Heart right ventricle (tissue), 16 donors: ENCODE measurements at regions of chr11 and their contacts with region 1.

Region 1: GRCh38 chr11:20912922-20913512 is 243.6 kb downstream of the NELL1 start:
- DNase-seq: no peak
- ATAC-seq: no peak
- H3K4me3 ChIP-seq: no peak overlapping the region
- H3K27ac ChIP-seq: no peak overlapping the region
- H3K4me1 ChIP-seq: no peaks in the 10 kb centered on the region
- H3K27me3 ChIP-seq: no peaks in the 10 kb centered on the region
- CTCF ChIP-seq: no peak

Region 2: GRCh38 chr11:20887137-20887536 is 25.9 kb before region 1 on chr11:
- intact Hi-C with region 1: loop called in 1 of 10 experiments (anchors 2 kb)
- DNase-seq: no peak
- ATAC-seq: no peak
- H3K4me3 ChIP-seq: no peak overlapping the region
- H3K27ac ChIP-seq: no peak overlapping the region
- H3K4me1 ChIP-seq: no peaks in the 10 kb centered on the region
- H3K27me3 ChIP-seq: peaks cover 0 to 7% (median 0%) of the 10 kb centered on the region in 7 donors
- CTCF ChIP-seq: no peak